GM12878 (cell line): ENCODE measurements at regions of chr7 and their contacts with region 1.

Region 1: DNA sequence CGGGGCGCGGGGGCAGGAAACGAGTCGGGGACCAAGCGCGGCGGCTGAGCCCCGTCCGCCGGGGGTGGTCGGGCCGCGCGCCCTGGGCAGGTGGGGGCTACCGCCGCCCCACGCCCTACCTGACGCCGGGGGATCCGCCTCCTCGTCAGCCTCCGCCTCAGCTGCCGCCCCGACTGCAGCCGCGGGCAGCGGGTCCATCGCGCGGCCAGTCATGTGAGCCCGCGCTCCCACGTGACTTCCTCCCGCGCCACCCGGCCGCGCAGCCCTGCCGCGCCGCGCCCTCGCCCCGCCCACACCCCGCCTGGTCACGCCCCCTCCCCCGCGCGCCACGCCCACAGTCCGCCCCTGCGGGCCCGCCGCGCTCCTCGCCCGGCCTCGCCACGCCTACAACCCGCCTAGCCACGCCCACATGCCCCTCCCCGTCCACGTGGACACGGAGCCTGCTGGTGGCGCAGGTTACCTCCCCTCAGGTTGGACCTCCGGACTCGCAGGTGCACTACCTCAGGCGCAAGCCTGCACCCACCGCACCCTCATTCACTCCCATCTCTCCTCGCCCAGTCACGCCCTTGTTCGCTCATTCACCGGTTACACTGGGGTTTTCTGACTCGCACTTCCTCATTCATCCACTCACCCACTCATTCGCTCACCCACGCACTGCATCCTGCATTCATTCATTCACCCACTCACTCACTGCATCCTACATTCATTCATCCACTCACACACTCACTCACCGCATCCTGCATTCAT is at the start of gene SNX8:
- DNase-seq: no peak
- ATAC-seq: peak; percentile 77
- H3K4me3 ChIP-seq: peak within 1 kb of the TSS; percentile 99
- H3K27ac ChIP-seq: peak within 1 kb of the TSS; percentile 92
- H3K4me1 ChIP-seq: peaks cover 17% of the 10 kb centered on the region
- H3K27me3 ChIP-seq: no peaks in the 10 kb centered on the region
- CTCF ChIP-seq: no peak
- EP300 ChIP-seq: 0 out of 4 replicates have a peak, but pooled peaks of 1 of the 2 experiments have one; percentile 15
- POLR2A ChIP-seq: peak; percentile 88
- RAD21 ChIP-seq: no peak
- polyA plus RNA-seq, gene SNX8: 6.4 to 21.5 TPM

Region 2: GRCh38 chr7:2241580-2242540 is 72.5 kb before region 1 on chr7 and contains the starts of genes MRM2 and NUDT1:
- CTCF ChIA-PET with region 1: interaction called, 3 read pairs
- POLR2A ChIA-PET with region 1: interaction called, 7 read pairs
- RAD21 ChIA-PET with region 1: interaction called, 10 read pairs
- SMC1A ChIA-PET with region 1: interaction called, 6 read pairs
- in situ Hi-C with region 1: no loop called
- intact Hi-C with region 1: loop called (anchors 5 kb)
- DNase-seq: no peak
- ATAC-seq: peak; percentile 80
- H3K4me3 ChIP-seq: peak within 1 kb of the TSS; percentile 83
- H3K27ac ChIP-seq: peak within 1 kb of the TSS; percentile 84
- H3K4me1 ChIP-seq: peaks cover 53% of the 10 kb centered on the region
- H3K27me3 ChIP-seq: no peaks in the 10 kb centered on the region
- CTCF ChIP-seq: no peak
- EP300 ChIP-seq: no peak
- POLR2A ChIP-seq: peak; percentile 99
- RAD21 ChIP-seq: no peak
- polyA plus RNA-seq, gene MRM2: 91.4 to 92.9 TPM
- polyA plus RNA-seq, gene NUDT1: 7.7 to 23.3 TPM

Region 3: DNA sequence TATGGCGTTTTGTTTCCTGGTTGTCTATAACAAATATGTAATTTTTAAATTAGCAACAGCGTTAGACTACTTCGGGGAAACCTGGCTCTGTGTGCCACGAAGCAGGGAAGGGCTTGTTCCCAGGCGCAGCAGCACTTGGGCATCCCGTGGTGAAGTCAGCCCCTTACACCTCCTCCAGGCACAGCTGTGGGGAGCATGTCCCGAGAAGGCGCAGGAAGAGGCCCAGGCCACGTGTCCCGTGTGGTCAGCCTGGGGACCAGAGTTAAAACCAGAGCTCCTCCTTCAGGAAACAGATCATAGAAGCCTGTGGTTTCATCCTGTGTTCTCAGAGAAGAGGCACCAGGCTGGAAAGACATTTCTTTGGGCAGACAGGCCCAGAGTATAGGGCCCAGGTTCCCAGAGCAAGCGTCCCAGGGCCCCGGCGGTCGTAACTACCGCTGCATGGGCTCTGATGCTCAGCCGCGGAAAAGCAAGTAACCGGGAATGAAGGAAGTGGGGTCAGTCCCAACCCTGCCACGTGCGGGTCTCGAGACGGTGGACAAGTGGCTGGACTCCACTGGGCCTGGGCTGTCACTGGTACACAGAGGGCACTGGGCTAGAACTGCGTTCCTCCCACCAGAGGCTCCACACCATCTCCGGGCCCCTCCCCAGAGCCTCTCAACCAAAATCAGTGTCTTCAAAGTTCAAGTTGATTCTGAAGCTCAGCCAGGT is 65.2 kb before region 1 on chr7:
- CTCF ChIA-PET with region 1: interaction called, 5 read pairs
- POLR2A ChIA-PET with region 1: interaction called, 12 read pairs
- RAD21 ChIA-PET with region 1: interaction called, 3 read pairs
- SMC1A ChIA-PET with region 1: interaction called, 5 read pairs
- in situ Hi-C with region 1: no loop called
- intact Hi-C with region 1: loop called (anchors 5 kb)
- DNase-seq: peak; percentile 48
- ATAC-seq: peak; percentile 67
- H3K4me3 ChIP-seq: peak overlapping the region; percentile 50; the same call in 1 of the 2 replicates
- H3K27ac ChIP-seq: peak overlapping the region; percentile 67
- H3K4me1 ChIP-seq: peaks cover 33% of the 10 kb centered on the region
- H3K27me3 ChIP-seq: no peaks in the 10 kb centered on the region
- CTCF ChIP-seq: peak in 2 of 3 experiments; percentile 12 to 54; a peak in 2 of 6 replicates
- EP300 ChIP-seq: 0 out of 4 replicates have a peak, but pooled peaks of 1 of the 2 experiments have one; percentile 13
- POLR2A ChIP-seq: peak; percentile 44; the same call in 1 of the 2 replicates
- RAD21 ChIP-seq: 0 out of 2 replicates have a peak, but pooled peaks have one; percentile 24

Region 4: GRCh38 chr7:2444476-2444875 is 130.1 kb after region 1 on chr7:
- CTCF ChIA-PET with region 1: no interaction called
- POLR2A ChIA-PET with region 1: no interaction called
- RAD21 ChIA-PET with region 1: no interaction called
- SMC1A ChIA-PET with region 1: no interaction called
- in situ Hi-C with region 1: no loop called
- intact Hi-C with region 1: no loop called
- DNase-seq: no peak
- ATAC-seq: no peak
- H3K4me3 ChIP-seq: no peak overlapping the region
- H3K27ac ChIP-seq: no peak overlapping the region
- H3K4me1 ChIP-seq: no peaks in the 10 kb centered on the region
- H3K27me3 ChIP-seq: no peaks in the 10 kb centered on the region
- CTCF ChIP-seq: no peak
- EP300 ChIP-seq: no peak
- POLR2A ChIP-seq: no peak
- RAD21 ChIP-seq: no peak